CD4-positive, alpha-beta memory T cell (primary cell): ENCODE measurements at regions of chr1 and their contacts with region 1.

Region 1: GRCh38 chr1:172708452-172708851 is 49.5 kb downstream of the FASLG start:
- DNase-seq: peak; percentile 51 to 78 (median 61)
- H3K4me3 ChIP-seq: peak overlapping the region in 1 of 2 donors; percentile 0
- H3K4me3 Mint-ChIP-seq: peak overlapping the region; percentile 24 to 74 (median 62)
- H3K27ac ChIP-seq: no peak overlapping the region
- H3K27ac Mint-ChIP-seq: peak overlapping the region; percentile 16 to 84 (median 68)
- H3K4me1 ChIP-seq: peaks cover 58% of the 10 kb centered on the region
- H3K4me1 Mint-ChIP-seq: peaks cover 20 to 36% (median 30%) of the 10 kb centered on the region in 4 donors
- H3K27me3 ChIP-seq: no peaks in the 10 kb centered on the region
- H3K27me3 Mint-ChIP-seq: no peaks in the 10 kb centered on the region

Region 2: DNA sequence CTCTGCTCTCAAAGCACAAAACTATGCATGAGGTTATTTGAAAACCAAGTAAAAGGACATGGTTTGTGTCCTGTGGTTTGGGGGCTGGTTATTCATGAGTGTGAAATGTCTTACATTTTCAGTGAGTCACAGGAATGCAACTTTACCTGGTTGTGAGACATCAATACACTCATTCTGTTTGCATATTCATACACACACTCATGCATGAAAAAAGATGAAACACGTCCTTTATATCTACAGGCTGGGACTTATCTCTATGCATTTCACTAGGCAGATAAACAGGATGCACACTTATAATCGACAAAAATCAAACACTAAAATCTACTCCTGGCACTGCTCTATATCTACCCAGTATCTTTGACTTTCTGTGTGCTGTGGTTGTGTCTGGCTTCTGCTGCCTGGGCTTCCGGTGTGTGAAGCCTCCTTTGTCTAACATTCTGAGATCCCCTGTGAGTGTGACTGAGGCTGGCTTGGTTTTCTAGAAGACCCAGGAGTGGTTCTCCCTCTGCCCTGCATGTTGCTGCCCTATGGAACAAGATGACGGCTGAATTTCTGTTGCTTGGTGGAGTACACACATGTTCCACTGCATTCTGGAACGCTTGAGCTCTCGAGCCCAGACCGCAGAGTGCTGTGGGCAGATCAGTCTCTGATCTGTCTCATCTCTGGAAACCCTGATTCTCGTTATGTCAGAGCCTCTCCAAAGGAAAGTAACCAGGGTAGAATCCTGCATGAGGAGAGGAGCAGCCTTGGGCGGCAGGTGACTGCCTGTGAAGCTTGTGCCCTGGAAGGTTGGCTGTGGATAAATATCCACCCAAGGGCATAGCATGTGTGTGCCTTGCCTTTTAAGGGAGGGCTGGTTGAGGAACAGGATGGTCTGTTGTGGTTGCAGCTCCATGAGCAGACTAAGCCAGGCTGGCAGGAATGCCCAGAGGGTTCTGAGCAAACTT is 69.3 kb before region 1 on chr1:
- CTCF ChIA-PET with region 1: interaction called, 5 read pairs
- POLR2A ChIA-PET with region 1: interaction called, 10 read pairs
- intact Hi-C with region 1: loop called (anchors 2 kb)
- DNase-seq: peak; percentile 73 to 89 (median 77)
- H3K4me3 ChIP-seq: peak overlapping the region; percentile 25 to 27
- H3K4me3 Mint-ChIP-seq: peak overlapping the region; percentile 73 to 86 (median 80)
- H3K27ac ChIP-seq: peak overlapping the region; percentile 38
- H3K27ac Mint-ChIP-seq: peak overlapping the region; percentile 82 to 94 (median 90)
- H3K4me1 ChIP-seq: peaks cover 74% of the 10 kb centered on the region
- H3K4me1 Mint-ChIP-seq: peaks cover 62 to 77% (median 72%) of the 10 kb centered on the region in 4 donors
- H3K27me3 ChIP-seq: no peaks in the 10 kb centered on the region
- H3K27me3 Mint-ChIP-seq: no peaks in the 10 kb centered on the region

Region 3: DNA sequence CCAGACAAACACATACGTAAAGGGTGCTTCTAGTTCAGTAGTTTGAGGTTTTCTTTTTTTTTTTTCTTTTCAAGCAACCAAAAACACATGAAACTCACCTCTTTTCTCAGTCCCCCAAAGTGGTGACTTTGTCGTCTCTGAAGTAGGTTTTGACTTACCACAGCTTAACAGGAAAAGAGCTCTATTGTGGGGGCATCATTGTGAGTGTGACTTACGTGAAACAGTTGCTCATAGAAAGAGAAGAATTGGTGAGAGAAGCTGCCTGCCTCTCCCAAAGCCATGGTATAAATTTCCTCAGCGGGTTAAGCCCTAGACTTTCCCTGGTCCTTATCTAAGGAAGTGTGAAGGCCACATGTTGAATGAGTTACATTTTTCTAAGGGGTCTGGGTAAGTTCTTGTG is 37.7 kb before region 1 on chr1:
- CTCF ChIA-PET with region 1: no interaction called
- POLR2A ChIA-PET with region 1: interaction called, 4 read pairs
- intact Hi-C with region 1: loop called (anchors 1 kb)
- DNase-seq: peak; percentile 56 to 69 (median 65)
- H3K4me3 ChIP-seq: no peak overlapping the region
- H3K4me3 Mint-ChIP-seq: peak overlapping the region in 5 of 8 donors; percentile 17 to 66 (median 29)
- H3K27ac ChIP-seq: no peak overlapping the region
- H3K27ac Mint-ChIP-seq: peak overlapping the region; percentile 69 to 87 (median 78)
- H3K4me1 ChIP-seq: peaks cover 64% of the 10 kb centered on the region
- H3K4me1 Mint-ChIP-seq: peaks cover 48 to 79% (median 65%) of the 10 kb centered on the region in 4 donors
- H3K27me3 ChIP-seq: no peaks in the 10 kb centered on the region
- H3K27me3 Mint-ChIP-seq: no peaks in the 10 kb centered on the region